Activated T-helper 2 cell treated with anti-CD3 and anti-CD28 coated beads, Interferon-gamma antibody, Interleukin-2, Interleukin-4, amounts not matched to agents 10 μg/mL and 5 μg/mL and 100 μg/mL, durations not matched to agents 14 hours and 24 hours and 36 hours (primary cell): ENCODE measurements at regions of chr17 and their contacts with region 1.

Region 1: DNA sequence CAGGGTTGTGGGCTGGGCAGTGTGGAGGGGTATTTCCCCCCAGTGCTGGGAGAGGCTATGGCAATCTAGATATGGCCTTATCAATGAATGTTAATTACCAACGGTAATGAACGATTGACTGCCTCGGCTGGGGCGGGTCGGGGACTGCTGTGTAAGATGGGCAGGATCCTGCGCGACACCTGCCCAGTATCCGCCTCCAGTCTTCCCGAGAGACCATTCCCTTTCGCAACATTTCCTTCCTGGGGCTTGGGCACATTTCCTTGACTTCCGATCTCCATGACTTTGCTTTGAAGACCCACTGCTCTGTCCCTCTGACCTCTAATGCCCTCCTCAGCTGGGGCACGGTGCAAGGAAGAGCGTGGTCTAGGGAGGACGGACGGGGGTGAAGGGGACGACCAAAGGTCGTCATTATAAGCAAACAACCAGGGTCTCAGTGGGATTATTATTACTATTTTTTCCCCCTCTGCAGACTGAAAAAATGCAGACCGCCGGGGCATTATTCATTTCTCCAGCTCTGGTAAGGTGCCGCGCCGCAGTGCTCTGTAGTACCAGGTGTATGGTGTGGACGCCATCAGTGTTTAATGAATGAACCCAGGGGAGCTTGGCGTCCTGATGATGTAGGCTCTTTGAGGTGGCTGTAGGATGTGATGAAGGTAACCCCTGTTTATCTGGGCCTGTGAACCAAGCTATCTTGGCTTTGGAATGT is 506 bp downstream of the ATP5MC1 start:
- DNase-seq: no peak
- H3K4me3 Mint-ChIP-seq: peak overlapping the region; percentile 96
- H3K27ac Mint-ChIP-seq: peak overlapping the region; percentile 92
- H3K4me1 Mint-ChIP-seq: peaks cover 20% of the 10 kb centered on the region
- H3K27me3 Mint-ChIP-seq: no peaks in the 10 kb centered on the region

Region 2: GRCh38 chr17:48830840-48831548 is 62.1 kb before region 1 on chr17 and contains the start of gene CALCOCO2:
- intact Hi-C with region 1: loop called (anchors 1 kb)
- DNase-seq: peak; percentile 83
- H3K4me3 Mint-ChIP-seq: peak within 1 kb of the TSS; percentile 97
- H3K27ac Mint-ChIP-seq: peak within 1 kb of the TSS; percentile 98
- H3K4me1 Mint-ChIP-seq: peaks cover 41% of the 10 kb centered on the region
- H3K27me3 Mint-ChIP-seq: peaks cover 7% of the 10 kb centered on the region
- total RNA-seq, gene CALCOCO2: 51.7 and 53.7 TPM in 2 replicates

Region 3: DNA sequence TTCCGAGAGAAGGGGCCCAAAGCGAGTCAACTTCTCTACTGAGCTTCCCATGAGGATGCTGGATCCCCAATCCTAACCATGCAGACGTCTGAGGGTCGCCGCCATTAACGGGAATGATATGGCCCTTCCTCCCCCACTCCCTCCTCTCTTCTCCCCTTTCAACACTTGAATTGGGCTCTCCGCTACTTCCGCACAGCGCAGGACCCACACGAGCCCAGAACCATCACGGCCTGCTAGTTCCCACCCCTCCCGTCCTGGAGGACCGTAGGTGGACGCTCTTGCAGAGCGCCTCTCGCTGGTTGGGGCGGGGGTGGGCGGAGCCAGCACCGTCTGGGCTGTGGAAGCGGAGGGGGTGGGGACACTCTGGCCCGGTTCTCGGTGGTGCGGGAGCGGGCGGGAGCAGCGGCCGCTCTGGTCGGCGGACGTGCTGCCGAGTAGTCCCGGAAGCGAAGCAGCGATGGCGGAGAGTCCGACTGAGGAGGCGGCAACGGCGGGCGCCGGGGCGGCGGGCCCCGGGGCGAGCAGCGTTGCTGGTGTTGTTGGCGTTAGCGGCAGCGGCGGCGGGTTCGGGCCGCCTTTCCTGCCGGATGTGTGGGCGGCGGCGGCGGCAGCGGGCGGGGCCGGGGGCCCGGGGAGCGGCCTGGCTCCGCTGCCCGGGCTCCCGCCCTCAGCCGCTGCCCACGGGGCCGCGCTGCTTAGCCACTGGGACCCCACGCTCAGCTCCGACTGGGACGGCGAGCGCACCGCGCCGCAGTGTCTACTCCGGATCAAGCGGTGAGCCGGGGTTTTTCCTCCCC is 15.2 kb after region 1 on chr17 and contains the start of gene UBE2Z:
- intact Hi-C with region 1: loop called (anchors 1 kb)
- DNase-seq: peak; percentile 82
- H3K4me3 Mint-ChIP-seq: peak within 1 kb of the TSS; percentile 87
- H3K27ac Mint-ChIP-seq: peak within 1 kb of the TSS; percentile 95
- H3K4me1 Mint-ChIP-seq: peaks cover 39% of the 10 kb centered on the region
- H3K27me3 Mint-ChIP-seq: no peaks in the 10 kb centered on the region
- total RNA-seq, gene UBE2Z: 81.3 and 85.2 TPM in 2 replicates

Region 4: DNA sequence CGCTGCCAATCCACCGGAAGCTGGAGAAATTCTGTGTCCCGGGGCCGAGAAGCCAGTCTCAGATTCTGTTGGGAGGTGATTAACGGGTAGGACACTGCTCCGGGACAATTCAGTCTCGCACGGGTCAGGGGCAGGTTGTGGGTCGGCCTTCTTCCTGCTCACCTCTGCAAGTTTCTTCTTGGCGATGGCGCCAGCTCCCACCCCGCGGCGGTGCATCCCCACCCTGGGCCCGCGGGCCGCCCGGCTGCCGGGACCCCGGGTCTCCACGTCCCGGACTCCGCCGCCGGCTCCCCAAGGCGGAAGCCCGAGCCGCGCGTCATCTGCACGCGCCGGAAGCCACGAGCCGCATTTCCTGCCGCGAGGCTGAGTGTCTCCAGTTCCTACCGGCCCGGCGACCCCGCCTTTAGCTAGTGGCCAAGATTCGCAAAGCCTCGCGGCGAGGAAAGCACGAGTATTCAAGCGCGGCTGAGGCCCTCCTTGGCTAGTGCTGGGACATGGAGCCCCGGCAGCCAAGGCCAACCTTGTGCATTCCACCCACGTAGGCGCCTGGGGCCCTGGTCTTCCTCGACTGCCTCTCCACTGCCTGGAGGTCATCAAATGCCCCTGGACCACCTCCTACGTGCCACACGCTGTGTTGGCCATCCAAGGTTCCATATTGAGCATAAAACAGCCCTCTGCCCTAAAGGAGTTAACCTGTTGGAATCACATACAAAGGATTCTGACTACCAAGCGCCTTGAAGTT is 51.6 kb after region 1 on chr17 and contains the start of gene SNF8:
- intact Hi-C with region 1: loop called (anchors 2 kb)
- DNase-seq: peak; percentile 91
- H3K4me3 Mint-ChIP-seq: peak within 1 kb of the TSS; percentile 100
- H3K27ac Mint-ChIP-seq: peak within 1 kb of the TSS; percentile 96
- H3K4me1 Mint-ChIP-seq: peaks cover 12% of the 10 kb centered on the region
- H3K27me3 Mint-ChIP-seq: no peaks in the 10 kb centered on the region
- total RNA-seq, gene SNF8: 145 and 152 TPM in 2 replicates